Activated CD4-positive, alpha-beta T cell treated with anti-CD3 and anti-CD28 coated beads, Interleukin-2, amount 10 ng/mL, durations not matched to agents 24 days and 14 days (primary cell): ENCODE measurements at regions of chr19 and their contacts with region 1.

Region 1: DNA sequence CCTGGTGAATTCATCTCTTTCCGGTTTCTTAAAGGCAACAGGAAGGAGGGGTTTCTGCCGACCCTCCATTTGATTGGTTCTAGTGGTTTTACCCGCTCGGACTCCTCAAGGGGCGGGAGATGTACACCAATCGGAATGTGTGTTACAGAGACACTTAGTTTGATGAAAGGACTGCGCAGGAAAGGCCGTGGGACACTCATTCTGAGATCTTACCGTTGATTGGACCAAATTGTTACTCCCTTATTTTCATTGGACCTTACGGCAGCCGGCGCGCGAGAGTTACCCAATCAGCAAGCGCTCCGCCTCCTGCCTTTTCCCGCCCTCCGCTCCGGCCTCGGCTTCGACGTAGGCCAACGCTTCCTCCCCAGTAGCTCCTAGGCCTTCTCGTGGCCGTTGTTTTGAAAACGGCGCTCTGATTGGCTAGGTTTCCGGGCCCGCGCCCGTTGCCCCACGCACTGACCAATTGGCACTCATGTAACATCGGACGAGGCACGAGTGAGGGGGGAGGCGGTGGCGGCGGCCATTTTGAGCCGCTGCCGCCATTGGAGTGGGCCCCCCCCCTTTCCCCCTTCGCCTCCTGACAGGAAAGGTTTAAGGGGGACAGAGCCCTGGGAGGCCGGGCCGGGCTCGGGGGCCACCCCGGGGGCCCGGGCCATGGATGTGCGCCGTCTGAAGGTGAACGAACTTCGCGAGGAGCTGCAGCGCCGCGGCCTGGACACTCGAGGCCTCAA is at the start of gene HNRNPUL1:
- DNase-seq: peak; percentile 100
- H3K4me3 Mint-ChIP-seq: peak within 1 kb of the TSS; percentile 92
- H3K27ac Mint-ChIP-seq: peak within 1 kb of the TSS; percentile 100
- H3K4me1 Mint-ChIP-seq: peaks cover 47% of the 10 kb centered on the region
- H3K27me3 Mint-ChIP-seq: peaks cover 8% of the 10 kb centered on the region
- total RNA-seq, gene HNRNPUL1: 256 and 258 TPM in 2 replicates

Region 2: DNA sequence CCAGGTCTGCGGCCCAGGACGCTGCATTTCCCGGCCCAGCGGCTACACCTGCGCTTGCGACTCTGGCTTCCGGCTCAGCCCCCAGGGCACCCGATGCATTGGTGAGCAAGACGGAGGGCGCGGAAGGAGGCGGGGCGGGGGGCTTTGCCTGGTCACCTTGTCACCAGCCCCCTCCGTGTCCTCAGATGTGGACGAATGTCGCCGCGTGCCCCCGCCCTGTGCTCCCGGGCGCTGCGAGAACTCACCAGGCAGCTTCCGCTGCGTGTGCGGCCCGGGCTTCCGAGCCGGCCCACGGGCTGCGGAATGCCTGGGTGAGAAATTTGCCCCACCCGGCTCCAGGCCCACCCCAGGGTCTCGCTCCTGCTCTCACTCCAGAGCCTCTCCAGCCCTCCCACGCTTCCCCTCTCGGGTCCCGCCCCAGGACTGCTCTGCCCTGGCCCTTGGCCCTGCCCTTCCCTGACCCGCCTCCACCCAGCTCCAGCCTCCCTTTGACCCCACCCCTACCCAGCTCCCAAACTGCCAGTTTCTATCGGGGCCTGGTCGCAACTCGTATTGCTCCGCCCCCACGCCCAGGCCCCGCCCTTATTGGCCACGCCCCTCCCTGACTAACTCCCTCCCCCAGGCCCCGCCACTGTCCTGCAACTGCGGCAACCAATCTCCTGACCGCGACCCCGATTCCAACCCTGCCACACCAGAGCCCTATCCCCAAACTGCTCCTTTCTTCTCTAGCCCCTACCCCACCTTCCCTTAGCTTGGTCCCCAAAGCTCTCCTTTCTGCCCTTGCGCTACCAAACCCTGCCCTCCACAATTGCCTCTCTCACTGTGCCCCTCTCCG is 654.2 kb before region 1 on chr19:
- intact Hi-C with region 1: loop called (anchors 2 kb)
- DNase-seq: peak; percentile 97
- H3K4me3 Mint-ChIP-seq: peak overlapping the region; percentile 95
- H3K27ac Mint-ChIP-seq: peak overlapping the region; percentile 97
- H3K4me1 Mint-ChIP-seq: peaks cover 43% of the 10 kb centered on the region
- H3K27me3 Mint-ChIP-seq: no peaks in the 10 kb centered on the region

Region 3: DNA sequence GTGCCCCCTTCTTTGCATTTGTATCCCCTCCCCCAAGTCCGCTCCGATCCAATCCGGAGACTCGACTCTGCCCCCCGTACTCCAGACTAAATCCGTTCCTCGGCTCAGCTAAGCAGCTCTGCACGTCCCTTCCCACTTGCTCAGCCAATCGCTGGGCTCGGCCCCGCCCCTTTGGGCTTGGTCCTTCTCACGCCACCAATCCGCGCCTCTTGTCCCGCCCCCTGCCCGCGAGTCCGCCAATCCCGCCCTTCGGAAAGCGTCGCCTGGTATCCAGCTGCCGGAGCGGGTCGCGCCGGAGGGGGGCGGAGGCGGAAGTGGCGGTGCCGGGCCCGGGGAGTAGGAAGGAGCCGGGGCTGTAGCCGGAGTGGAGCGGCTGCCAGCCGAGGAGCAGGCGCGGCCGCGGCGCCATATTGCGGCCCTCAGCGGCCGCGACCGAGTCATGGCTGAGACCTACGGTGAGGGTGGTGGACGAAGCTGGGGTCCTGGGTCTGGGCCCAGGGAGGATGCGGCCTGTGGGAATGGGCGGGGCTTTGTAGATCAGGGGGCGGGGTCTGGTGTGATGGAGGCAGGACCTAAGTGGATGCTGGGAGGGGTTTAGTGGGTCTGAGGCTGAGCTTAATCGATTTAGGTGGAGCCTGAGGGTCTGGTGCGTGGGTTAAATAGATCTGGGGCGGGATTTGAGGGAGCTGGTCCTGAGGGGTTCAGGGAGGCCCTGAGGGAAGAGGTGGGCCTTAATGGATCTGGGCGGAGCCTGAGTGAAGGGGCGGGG is 485.9 kb before region 1 on chr19 and contains the start of gene RAB4B:
- intact Hi-C with region 1: loop called (anchors 1 kb)
- DNase-seq: peak; percentile 100
- H3K4me3 Mint-ChIP-seq: peak within 1 kb of the TSS; percentile 94
- H3K27ac Mint-ChIP-seq: peak within 1 kb of the TSS; percentile 96
- H3K4me1 Mint-ChIP-seq: peaks cover 53% of the 10 kb centered on the region
- H3K27me3 Mint-ChIP-seq: no peaks in the 10 kb centered on the region
- total RNA-seq, gene RAB4B: 36.3 and 41.0 TPM in 2 replicates

Region 4: DNA sequence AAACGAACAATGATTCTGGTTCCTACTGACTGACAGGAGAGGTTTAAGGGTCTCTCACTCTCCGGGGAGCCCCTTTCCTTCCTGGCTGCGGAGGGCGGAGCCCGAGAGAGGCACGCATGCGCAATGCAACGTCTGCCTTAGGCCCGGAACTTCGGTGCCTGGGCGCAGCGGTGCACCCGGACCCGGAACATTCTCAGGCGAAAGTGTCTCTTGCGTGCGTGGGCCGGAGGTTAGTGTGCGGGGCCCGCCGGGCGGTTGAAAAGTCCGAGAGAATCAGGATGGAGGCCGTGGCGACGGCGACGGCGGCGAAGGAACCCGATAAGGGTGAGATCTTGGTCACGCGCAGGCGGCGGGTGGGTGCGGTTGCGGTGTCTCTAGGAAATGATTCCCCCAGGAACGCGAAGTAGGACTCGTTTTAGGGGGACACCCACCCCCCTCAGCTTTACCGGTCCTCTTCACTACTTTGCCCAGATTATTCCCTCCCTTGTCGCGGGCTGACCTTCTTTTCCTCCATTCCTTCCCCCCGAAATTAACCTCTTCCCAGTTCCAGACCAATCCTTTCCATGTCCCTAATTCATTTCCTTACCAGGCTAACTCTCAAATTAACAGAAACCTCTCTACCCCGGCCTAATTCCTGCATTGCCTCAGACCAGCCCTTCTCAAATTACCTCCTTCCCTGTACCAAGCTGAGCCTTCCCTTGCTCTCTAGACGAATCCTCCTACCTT is 46.2 kb after region 1 on chr19 and contains the start of gene CCDC97:
- intact Hi-C with region 1: loop called (anchors 1 kb)
- DNase-seq: peak; percentile 97
- H3K4me3 Mint-ChIP-seq: peak within 1 kb of the TSS; percentile 99
- H3K27ac Mint-ChIP-seq: peak within 1 kb of the TSS; percentile 98
- H3K4me1 Mint-ChIP-seq: peaks cover 60% of the 10 kb centered on the region
- H3K27me3 Mint-ChIP-seq: no peaks in the 10 kb centered on the region
- total RNA-seq, gene CCDC97: 30.4 and 30.7 TPM in 2 replicates

Region 5: DNA sequence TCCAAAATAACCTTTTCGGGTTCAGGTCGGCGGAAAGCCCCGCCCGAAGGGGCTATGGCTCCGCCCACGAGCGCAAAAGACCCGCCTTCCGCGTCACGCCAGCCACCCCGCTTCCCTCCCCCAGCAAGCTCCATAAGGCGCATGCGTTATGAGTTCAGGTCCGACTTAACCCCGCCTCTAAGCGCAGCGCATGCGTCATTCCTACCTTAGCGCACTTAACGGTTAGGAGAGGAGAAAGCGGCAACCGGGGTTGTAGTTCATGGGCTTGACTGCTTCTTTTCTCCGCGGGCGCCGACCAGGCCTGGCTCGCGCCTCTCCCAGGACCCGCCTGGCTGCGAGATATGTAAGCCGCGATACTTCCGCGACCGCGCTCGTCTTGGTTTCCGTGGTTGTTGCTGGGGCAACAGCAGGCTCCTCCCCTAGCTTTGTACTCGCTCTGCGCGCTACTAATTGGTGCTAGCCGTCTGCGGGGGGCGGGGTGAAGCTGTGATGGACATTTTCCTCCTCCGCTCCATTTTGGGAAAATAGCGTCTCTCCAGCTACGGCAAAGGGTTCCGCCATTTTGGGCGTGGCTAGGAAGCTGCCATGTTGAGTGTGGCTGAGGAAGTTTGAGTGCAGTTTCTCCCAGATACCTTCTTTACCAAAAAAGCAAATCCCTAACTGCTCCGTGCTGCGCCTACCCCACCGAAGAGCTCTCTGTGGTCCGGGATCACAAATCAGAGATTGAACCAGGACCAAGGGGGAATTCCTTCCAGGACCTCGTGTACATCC is 99.9 kb after region 1 on chr19 and contains the start of gene B9D2:
- intact Hi-C with region 1: loop called (anchors 1 kb)
- DNase-seq: peak; percentile 99
- H3K4me3 Mint-ChIP-seq: peak within 1 kb of the TSS; percentile 93
- H3K27ac Mint-ChIP-seq: peak within 1 kb of the TSS; percentile 99
- H3K4me1 Mint-ChIP-seq: peaks cover 28% of the 10 kb centered on the region
- H3K27me3 Mint-ChIP-seq: no peaks in the 10 kb centered on the region
- total RNA-seq, gene B9D2: 6.3 and 8.6 TPM in 2 replicates

Region 6: DNA sequence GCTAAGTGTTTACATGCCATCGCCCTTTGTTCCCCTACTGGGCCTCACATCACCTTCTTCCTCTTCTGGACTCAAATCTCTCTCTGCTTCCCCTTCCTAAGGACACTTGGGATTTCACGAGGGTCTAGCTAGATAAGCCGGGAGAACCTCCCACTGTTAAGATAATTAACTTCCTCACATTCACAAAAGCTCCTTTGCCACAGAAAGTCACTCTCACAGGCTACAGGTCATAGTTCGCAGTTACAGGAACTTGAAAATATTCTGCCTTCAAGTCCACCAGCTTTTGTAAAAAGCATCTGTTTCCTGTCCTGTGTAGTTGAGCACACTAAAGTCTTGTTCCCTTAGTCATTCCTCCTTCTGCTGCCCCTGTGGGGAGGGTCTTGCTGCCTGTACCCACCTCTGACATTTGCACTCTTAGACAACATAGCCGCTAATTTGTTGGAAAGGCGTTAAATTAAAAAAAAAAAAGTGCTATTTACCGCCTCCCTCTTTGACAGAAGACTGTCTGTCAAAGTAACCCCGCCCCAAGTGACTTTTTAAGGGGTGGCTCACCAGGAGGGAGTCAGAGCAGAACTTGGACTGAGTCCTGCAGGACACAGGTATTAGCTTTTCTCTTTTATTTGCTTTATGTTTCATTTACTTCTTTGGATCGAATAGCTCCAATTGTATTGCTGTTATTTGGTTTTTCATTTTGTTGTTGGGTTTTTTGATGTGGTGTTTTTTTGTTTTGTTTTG is 285.1 kb after region 1 on chr19:
- intact Hi-C with region 1: loop called (anchors 5 kb)
- DNase-seq: peak; percentile 95
- H3K4me3 Mint-ChIP-seq: peak overlapping the region; percentile 99
- H3K27ac Mint-ChIP-seq: peak overlapping the region; percentile 99
- H3K4me1 Mint-ChIP-seq: peaks cover 67% of the 10 kb centered on the region
- H3K27me3 Mint-ChIP-seq: no peaks in the 10 kb centered on the region